ENCODE measurements at regions of chr11 and their contacts with region 1.

Region 1: GRCh38 chr11:10307442-10308207 is 2.8 kb downstream of the ADM start:
- DNase-seq: peak in 1 of 2 donors; percentile 94
- H3K4me3 ChIP-seq: peak overlapping the region; percentile 84 to 85
- H3K27ac ChIP-seq: peak overlapping the region; percentile 96
- H3K4me1 ChIP-seq: peaks cover 44% of the 10 kb centered on the region
- H3K27me3 ChIP-seq: no peaks in the 10 kb centered on the region
- CTCF ChIP-seq: peak; percentile 87 to 99 (median 99)
- POLR2A ChIP-seq: no peak

Region 2: GRCh38 chr11:9613118-9613829 is 694.4 kb before region 1 on chr11:
- intact Hi-C with region 1: loop called (anchors 10 kb)
- DNase-seq: peak in 1 of 2 donors; percentile 97
- H3K4me3 ChIP-seq: peak overlapping the region; percentile 47 to 50
- H3K27ac ChIP-seq: peak overlapping the region; percentile 99
- H3K4me1 ChIP-seq: peaks cover 15% of the 10 kb centered on the region
- H3K27me3 ChIP-seq: no peaks in the 10 kb centered on the region
- CTCF ChIP-seq: peak; percentile 87 to 92 (median 88)
- POLR2A ChIP-seq: peak in 1 of 2 donors; percentile 43

Region 3: GRCh38 chr11:9757809-9758636 is 549.6 kb before region 1 on chr11:
- intact Hi-C with region 1: loop called (anchors 5 kb)
- DNase-seq: no peak
- H3K4me3 ChIP-seq: peak overlapping the region; percentile 65 to 75
- H3K27ac ChIP-seq: peak overlapping the region; percentile 99
- H3K4me1 ChIP-seq: peaks cover 81% of the 10 kb centered on the region
- H3K27me3 ChIP-seq: no peaks in the 10 kb centered on the region
- CTCF ChIP-seq: peak; percentile 63 to 80 (median 68)
- POLR2A ChIP-seq: peak in 1 of 2 donors; percentile 30

Region 4: DNA sequence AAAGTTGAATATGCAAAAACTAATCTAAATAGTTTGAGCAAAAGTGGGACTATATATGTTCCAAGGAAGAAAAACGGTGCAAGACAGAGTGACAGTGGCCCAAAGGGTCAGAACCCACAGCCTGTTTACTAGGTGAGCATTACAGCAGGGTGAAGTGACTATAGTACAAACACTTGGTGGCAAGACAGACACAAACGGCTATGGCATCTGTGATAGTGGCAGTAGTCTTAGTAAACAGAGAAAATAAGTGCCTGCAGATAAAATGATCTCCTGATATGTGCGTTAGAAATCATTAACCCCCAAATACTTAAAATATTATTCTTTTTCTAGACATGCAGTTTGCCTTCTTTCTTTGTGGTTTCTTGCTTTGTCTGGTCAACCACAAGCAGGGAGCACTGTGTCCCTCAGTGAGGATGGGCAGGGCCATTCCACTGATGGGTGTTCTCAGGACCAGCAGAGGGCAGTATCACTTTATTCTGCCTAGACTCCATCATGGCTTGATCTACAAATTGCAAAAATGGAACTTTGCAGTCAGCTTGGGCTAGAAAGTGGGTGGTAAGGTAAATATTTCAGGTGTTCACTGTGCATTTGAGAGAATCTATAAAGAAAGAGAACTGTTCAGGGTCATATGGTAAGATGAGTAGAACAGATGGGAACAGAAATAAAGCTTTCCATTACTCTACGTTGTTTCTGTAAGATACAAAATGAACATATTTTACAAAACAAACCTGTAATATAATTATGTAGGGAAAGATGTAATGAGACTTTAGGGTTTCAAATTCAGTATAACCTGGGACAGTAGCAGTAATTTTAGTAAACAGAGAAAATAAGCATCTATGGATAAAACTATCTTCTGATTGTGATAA is 445.5 kb before region 1 on chr11:
- intact Hi-C with region 1: loop called (anchors 10 kb)
- DNase-seq: no peak
- H3K4me3 ChIP-seq: no peak overlapping the region
- H3K27ac ChIP-seq: no peak overlapping the region
- H3K4me1 ChIP-seq: peaks cover 15% of the 10 kb centered on the region
- H3K27me3 ChIP-seq: no peaks in the 10 kb centered on the region
- CTCF ChIP-seq: peak in 2 of 3 experiments; percentile 44 to 49
- POLR2A ChIP-seq: no peak

Region 5: GRCh38 chr11:9982800-9983579 is 324.6 kb before region 1 on chr11:
- intact Hi-C with region 1: loop called (anchors 10 kb)
- DNase-seq: no peak
- H3K4me3 ChIP-seq: no peak overlapping the region
- H3K27ac ChIP-seq: no peak overlapping the region
- H3K4me1 ChIP-seq: peaks cover 5% of the 10 kb centered on the region
- H3K27me3 ChIP-seq: no peaks in the 10 kb centered on the region
- CTCF ChIP-seq: no peak
- POLR2A ChIP-seq: no peak